Ovary (tissue), 10 donors: ENCODE measurements at regions of chr1 and their contacts with region 1.

Region 1: GRCh38 chr1:177103005-177103852 is 61.3 kb downstream of the ASTN1 start:
- DNase-seq: no peak
- H3K4me3 ChIP-seq: no peak overlapping the region
- H3K27ac ChIP-seq: no peak overlapping the region
- H3K4me1 ChIP-seq: no peaks in the 10 kb centered on the region
- H3K27me3 ChIP-seq: no peaks in the 10 kb centered on the region
- CTCF ChIP-seq: no peak
- EP300 ChIP-seq: no peak
- POLR2A ChIP-seq: no peak

Region 2: DNA sequence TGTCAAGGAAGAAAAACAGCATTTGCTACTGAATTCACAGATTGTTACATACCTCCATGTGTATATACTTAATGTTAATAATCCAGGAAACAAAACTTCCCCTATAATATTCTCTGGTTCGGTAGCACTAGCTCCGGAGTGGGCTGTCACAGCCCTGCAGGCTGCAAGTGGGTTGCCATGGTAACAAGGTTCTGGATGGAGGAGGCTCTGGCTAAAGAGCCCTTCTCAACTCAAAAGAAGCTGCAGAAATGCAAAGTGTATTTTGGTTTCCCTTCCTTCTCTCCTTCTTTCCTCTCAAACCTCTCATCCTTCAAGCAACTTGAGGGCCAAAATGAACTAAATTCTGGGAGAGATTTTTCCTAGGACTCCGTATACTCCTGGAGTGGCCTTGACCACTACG is 16.1 kb after region 1 on chr1:
- intact Hi-C with region 1: no loop called
- DNase-seq: no peak
- H3K4me3 ChIP-seq: no peak overlapping the region
- H3K27ac ChIP-seq: no peak overlapping the region
- H3K4me1 ChIP-seq: no peaks in the 10 kb centered on the region
- H3K27me3 ChIP-seq: no peaks in the 10 kb centered on the region
- CTCF ChIP-seq: no peak
- EP300 ChIP-seq: no peak
- POLR2A ChIP-seq: no peak

Region 3: GRCh38 chr1:177377866-177378265 is 274.6 kb after region 1 on chr1:
- intact Hi-C with region 1: loop called in 1 of 4 experiments (anchors 2 kb)
- DNase-seq: no peak
- H3K4me3 ChIP-seq: no peak overlapping the region
- H3K27ac ChIP-seq: no peak overlapping the region
- H3K4me1 ChIP-seq: no peaks in the 10 kb centered on the region
- H3K27me3 ChIP-seq: no peaks in the 10 kb centered on the region
- CTCF ChIP-seq: no peak
- EP300 ChIP-seq: no peak
- POLR2A ChIP-seq: no peak